Activated naive CD4-positive, alpha-beta T cell treated with anti-CD3 and anti-CD28 coated beads for 36 hours (primary cell): ENCODE measurements at regions of chr7 and their contacts with region 1.

Region 1: DNA sequence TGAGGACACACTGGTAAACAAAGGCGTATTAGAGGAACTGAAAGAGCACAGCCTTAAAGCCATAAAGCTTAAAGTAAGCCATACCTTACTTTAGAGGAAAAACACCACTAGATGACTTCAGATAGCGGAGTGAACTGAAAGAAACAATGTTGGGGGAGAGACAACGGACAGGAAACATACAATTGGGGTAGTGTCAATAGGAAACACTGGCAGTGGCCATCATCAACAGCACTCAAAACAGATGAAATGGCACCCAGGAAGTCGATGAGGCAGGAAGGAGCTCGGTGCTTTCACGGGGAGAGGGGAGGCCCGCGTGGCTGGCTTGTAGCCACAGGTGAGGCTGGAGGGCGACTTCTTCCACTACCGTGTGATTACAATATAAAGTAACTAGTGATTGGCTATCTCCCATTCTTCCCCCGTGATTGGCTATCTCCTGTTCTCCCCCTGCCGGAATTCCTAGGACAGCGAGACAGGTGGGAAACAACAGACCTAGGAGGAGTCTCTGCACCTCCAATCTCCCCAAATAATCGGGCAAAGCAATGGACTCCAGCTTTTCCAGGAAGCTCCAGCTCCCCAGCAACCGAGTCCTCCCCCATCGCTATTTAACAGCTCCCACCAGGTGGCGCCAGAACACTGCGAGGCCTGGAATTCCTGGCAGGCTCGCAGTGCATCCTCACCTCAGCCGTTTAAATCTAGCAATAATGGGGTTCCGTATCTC is 2.4 kb upstream of the TAS2R38 start:
- DNase-seq: peak; percentile 88
- H3K4me3 Mint-ChIP-seq: peak overlapping the region; percentile 76
- H3K27ac Mint-ChIP-seq: peak overlapping the region; percentile 28
- H3K4me1 Mint-ChIP-seq: peaks cover 18% of the 10 kb centered on the region
- H3K27me3 Mint-ChIP-seq: no peaks in the 10 kb centered on the region

Region 2: GRCh38 chr7:141754939-141755338 is 221.0 kb before region 1 on chr7:
- CTCF ChIA-PET with region 1: interaction called, 4 read pairs
- intact Hi-C with region 1: loop called (anchors 5 kb)
- DNase-seq: no peak
- H3K4me3 Mint-ChIP-seq: no peak overlapping the region
- H3K27ac Mint-ChIP-seq: no peak overlapping the region
- H3K4me1 Mint-ChIP-seq: no peaks in the 10 kb centered on the region
- H3K27me3 Mint-ChIP-seq: no peaks in the 10 kb centered on the region

Region 3: GRCh38 chr7:142158736-142159496 is 183.0 kb after region 1 on chr7:
- CTCF ChIA-PET with region 1: no interaction called
- intact Hi-C with region 1: no loop called
- DNase-seq: no peak
- H3K4me3 Mint-ChIP-seq: no peak overlapping the region
- H3K27ac Mint-ChIP-seq: no peak overlapping the region
- H3K4me1 Mint-ChIP-seq: no peaks in the 10 kb centered on the region
- H3K27me3 Mint-ChIP-seq: no peaks in the 10 kb centered on the region

Region 4: GRCh38 chr7:142188846-142189245 is 212.9 kb after region 1 on chr7:
- CTCF ChIA-PET with region 1: interaction called, 6 read pairs
- intact Hi-C with region 1: loop called (anchors 1 kb)
- DNase-seq: no peak
- H3K4me3 Mint-ChIP-seq: no peak overlapping the region
- H3K27ac Mint-ChIP-seq: no peak overlapping the region
- H3K4me1 Mint-ChIP-seq: peaks cover 2% of the 10 kb centered on the region
- H3K27me3 Mint-ChIP-seq: peaks cover 5% of the 10 kb centered on the region